Ovary (tissue), 10 donors: ENCODE measurements at regions of chr9 and their contacts with region 1.

Region 1: GRCh38 chr9:113275157-113276131 is at the starts of genes CDC26 and PRPF4:
- DNase-seq: peak; percentile 97 to 99 (median 97)
- H3K4me3 ChIP-seq: peak within 1 kb of the TSS; percentile 94
- H3K27ac ChIP-seq: peak within 1 kb of the TSS; percentile 70 to 81
- H3K4me1 ChIP-seq: no peaks in the 10 kb centered on the region
- H3K27me3 ChIP-seq: no peaks in the 10 kb centered on the region
- CTCF ChIP-seq: no peak
- EP300 ChIP-seq: peak; percentile 92
- POLR2A ChIP-seq: peak; percentile 98
- total RNA-seq, gene CDC26: 24.2 to 40.0 (median 27.5) TPM
- total RNA-seq, gene PRPF4: 12.5 to 30.8 (median 22.3) TPM

Region 2: GRCh38 chr9:113401027-113401792 is 125.8 kb after region 1 on chr9 and contains the start of gene ALAD:
- intact Hi-C with region 1: loop called in 2 of 4 experiments (anchors 5 to 10 kb)
- DNase-seq: peak; percentile 99 to 100 (median 100)
- H3K4me3 ChIP-seq: peak within 1 kb of the TSS; percentile 71
- H3K27ac ChIP-seq: peak within 1 kb of the TSS; percentile 17 to 29
- H3K4me1 ChIP-seq: peaks cover 6% of the 10 kb centered on the region
- H3K27me3 ChIP-seq: no peaks in the 10 kb centered on the region
- CTCF ChIP-seq: peak; percentile 92 to 97 (median 96)
- EP300 ChIP-seq: no peak
- POLR2A ChIP-seq: no peak
- total RNA-seq, gene ALAD: 14.3 to 59.3 (median 34.7) TPM

Region 3: DNA sequence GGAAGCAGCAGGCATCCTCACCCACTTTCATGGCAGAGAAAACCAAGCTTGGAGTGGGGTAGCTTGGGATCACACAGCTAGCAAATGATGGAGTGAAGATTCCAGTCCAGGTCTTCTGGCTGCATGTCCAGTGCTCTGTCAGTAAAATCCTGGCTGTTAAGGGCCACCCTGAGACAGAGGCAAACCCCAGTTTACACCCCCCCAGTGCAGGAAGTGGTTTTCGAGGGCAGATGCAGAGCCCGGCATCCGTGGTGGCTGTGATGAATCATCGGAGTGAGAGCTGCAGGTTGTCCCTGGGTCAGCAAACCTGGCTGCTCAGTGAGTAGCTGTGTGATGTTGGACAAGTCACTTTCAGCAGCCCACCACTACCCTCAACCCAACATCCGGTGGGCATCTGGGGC is 303.4 kb after region 1 on chr9:
- intact Hi-C with region 1: loop called in 2 of 4 experiments (anchors 10 kb)
- DNase-seq: no peak
- H3K4me3 ChIP-seq: no peak overlapping the region
- H3K27ac ChIP-seq: no peak overlapping the region
- H3K4me1 ChIP-seq: peaks cover 10% of the 10 kb centered on the region
- H3K27me3 ChIP-seq: no peaks in the 10 kb centered on the region
- CTCF ChIP-seq: no peak
- EP300 ChIP-seq: no peak
- POLR2A ChIP-seq: no peak

Region 4: GRCh38 chr9:113669522-113670115 is 394.2 kb after region 1 on chr9:
- intact Hi-C with region 1: loop called in 1 of 4 experiments (anchors 10 kb)
- DNase-seq: no peak
- H3K4me3 ChIP-seq: no peak overlapping the region
- H3K27ac ChIP-seq: no peak overlapping the region
- H3K4me1 ChIP-seq: no peaks in the 10 kb centered on the region
- H3K27me3 ChIP-seq: no peaks in the 10 kb centered on the region
- CTCF ChIP-seq: no peak
- EP300 ChIP-seq: no peak
- POLR2A ChIP-seq: no peak